MCF 10A (cell line): ENCODE measurements at regions of chr2 and their contacts with region 1.

Region 1: DNA sequence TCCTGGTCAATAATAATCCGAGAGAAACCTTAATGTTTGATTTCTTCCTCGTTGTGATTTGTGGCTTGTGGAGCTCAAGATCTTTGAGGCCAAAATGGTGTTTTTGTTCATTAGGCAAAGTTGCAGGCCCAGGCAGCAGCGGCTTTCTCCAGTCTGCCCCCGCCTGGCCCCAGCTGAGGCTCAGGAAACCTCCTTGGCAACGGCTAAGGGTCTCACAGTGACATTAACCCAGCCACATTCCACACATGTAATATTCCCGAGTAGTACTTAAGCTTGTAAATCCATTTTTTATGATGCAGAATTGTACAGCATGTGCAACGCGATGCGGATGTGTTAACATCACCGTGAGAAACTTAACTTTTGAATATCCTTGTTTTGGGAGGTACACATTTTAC is 200.1 kb downstream of the BCL11A start:
- DNase-seq: no peak
- H3K4me3 Mint-ChIP-seq: no peak overlapping the region
- H3K27ac Mint-ChIP-seq: no peak overlapping the region
- H3K4me1 Mint-ChIP-seq: peaks cover 8% of the 10 kb centered on the region
- H3K27me3 Mint-ChIP-seq: no peaks in the 10 kb centered on the region
- CTCF ChIP-seq: no peak

Region 2: DNA sequence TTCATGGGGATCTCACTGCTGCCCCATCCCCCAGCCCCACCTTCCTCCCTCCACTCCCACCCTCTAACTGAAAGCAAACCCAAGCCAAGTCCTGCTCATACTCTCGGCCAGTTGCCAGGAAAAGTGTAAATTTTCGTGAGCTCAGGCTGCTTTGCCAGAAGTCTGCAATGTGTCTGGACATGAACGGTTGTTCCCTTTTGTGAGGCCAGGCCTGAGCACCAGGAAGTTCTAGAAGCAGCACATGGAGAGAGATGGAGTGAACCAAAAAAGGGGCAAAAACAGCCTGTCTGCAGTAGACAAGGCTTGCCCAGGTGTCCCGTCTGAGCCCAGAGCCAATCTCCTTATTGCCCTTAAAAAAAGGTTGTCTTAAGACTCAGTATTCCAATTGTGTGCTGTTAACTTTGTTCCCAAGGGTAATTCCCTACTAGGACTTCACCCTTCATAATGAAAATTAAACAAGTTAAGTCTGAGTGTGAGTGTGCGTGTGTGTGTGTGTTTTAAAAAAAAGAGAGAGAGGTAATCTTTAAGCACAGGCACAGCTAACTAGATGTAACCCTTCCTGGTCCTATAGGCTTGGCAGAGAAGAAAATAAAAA is 47.0 kb before region 1 on chr2:
- CTCF ChIA-PET with region 1: interaction called, 3 read pairs
- POLR2A ChIA-PET with region 1: interaction called, 13 read pairs
- intact Hi-C with region 1: no loop called
- DNase-seq: peak; percentile 90
- H3K4me3 Mint-ChIP-seq: no peak overlapping the region
- H3K27ac Mint-ChIP-seq: peak overlapping the region; percentile 93
- H3K4me1 Mint-ChIP-seq: peaks cover 9% of the 10 kb centered on the region
- H3K27me3 Mint-ChIP-seq: no peaks in the 10 kb centered on the region
- CTCF ChIP-seq: no peak